Caco-2 (cell line): ENCODE measurements at regions of chr3 and their contacts with region 1.

Region 1: GRCh38 chr3:156151824-156152428 is 31.5 kb downstream of the KCNAB1 start:
- DNase-seq: peak; percentile 65 to 66
- H3K4me3 ChIP-seq: no peak overlapping the region
- H3K4me3 Mint-ChIP-seq: no peak overlapping the region
- H3K27ac Mint-ChIP-seq: no peak overlapping the region
- H3K4me1 ChIP-seq: no peaks in the 10 kb centered on the region
- H3K4me1 Mint-ChIP-seq: peaks cover 8% of the 10 kb centered on the region
- H3K27me3 ChIP-seq: no peaks in the 10 kb centered on the region
- H3K27me3 Mint-ChIP-seq: no peaks in the 10 kb centered on the region
- CTCF ChIP-seq: peak; percentile 66 to 84

Region 2: DNA sequence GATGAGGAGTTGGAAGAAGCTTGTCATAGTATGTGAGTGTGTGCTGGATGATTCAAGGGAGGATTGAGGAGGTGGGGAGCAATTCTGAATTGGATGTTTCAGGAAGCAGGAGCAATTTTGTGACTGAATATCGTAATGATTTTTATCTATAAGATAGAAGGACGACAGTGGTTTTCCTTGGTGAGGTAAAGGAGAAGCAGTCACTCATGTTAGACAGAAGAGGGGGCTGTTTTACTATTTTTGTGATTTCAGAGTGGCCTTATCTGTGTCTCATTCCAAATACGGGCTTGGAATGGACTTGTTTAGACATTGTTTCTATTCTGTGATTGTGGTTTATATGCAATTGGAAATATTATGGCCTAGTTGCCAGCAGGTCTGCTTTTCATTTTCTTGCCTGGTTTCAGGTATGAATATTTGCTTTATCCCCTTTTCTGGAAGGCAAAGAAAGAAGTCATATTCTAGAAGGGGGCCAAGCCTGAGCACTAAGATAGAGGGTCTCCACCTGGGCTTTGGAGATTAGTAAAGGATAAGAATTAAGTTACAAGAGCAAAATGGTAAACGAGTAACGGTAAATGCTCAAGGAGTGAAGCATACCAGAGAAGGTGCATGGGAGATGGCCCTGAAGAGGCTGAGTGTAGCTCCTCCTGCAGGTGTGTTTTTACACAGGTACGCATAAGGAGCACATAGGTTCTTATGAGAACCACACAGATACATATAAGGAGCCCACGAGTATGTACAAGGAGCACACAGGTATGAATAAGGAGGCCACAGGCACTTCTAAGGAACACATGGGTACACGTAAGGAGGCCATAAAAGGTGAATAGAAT is 156.2 kb before region 1 on chr3:
- CTCF ChIA-PET with region 1: no interaction called
- POLR2A ChIA-PET with region 1: no interaction called
- intact Hi-C with region 1: loop called (anchors 1 kb)
- DNase-seq: peak in 1 of 2 experiments; percentile 20
- H3K4me3 ChIP-seq: no peak overlapping the region
- H3K4me3 Mint-ChIP-seq: no peak overlapping the region
- H3K27ac Mint-ChIP-seq: no peak overlapping the region
- H3K4me1 ChIP-seq: 0 out of 2 replicates have a peak, but pooled peaks cover 4% of the 10 kb centered on the region
- H3K4me1 Mint-ChIP-seq: peaks cover 7% of the 10 kb centered on the region
- H3K27me3 ChIP-seq: no peaks in the 10 kb centered on the region
- H3K27me3 Mint-ChIP-seq: peaks cover 5% of the 10 kb centered on the region
- CTCF ChIP-seq: peak; percentile 47 to 50

Region 3: DNA sequence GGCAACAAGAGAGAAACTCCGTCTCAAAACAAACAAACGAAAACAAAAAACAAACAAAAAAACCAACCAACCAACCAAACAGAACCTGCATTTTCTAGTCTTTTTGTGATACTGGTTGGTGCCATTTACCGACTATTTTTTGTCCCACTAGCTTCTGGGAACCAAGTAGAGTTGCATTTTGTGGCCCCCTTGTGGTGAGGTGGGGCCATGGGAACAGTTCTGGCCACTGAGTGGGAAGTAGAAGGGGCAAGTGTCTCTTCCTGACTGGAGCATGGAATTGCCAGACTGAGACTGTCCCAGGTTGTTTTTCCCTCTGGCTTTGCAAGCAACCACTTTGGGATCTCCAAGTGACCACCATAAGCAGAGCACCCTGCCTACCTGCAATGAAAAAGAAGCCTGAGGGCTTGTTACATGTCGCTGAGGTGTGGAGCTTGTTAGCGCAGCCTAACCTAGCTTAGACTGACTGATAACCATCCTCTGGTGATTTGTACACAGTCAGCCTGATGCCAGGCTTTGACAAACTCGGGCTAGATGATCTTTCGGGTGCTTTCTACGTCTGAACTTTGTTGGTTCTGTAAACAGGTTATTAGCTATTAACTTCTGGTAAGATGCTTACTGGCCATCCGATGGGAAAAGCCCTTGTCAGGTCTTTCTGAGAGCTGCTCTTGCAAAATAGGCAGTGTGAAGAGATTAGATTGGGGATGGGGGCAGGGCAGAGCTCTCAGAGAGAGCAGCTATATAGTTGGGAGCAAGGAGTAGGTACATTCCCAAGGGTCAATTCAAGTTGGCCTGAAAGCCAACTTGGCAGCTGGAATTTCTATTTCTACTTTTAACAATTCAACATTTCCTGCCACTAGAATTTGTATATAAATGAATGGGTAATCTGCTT is 230.8 kb after region 1 on chr3:
- CTCF ChIA-PET with region 1: interaction called, 8 read pairs
- POLR2A ChIA-PET with region 1: no interaction called
- intact Hi-C with region 1: loop called (anchors 1 kb)
- DNase-seq: peak; percentile 46 to 59
- H3K4me3 ChIP-seq: no peak overlapping the region
- H3K4me3 Mint-ChIP-seq: no peak overlapping the region
- H3K27ac Mint-ChIP-seq: no peak overlapping the region
- H3K4me1 ChIP-seq: peaks cover 2% of the 10 kb centered on the region; the same call in 1 of the 2 replicates
- H3K4me1 Mint-ChIP-seq: no peaks in the 10 kb centered on the region
- H3K27me3 ChIP-seq: no peaks in the 10 kb centered on the region
- H3K27me3 Mint-ChIP-seq: peaks cover 3% of the 10 kb centered on the region
- CTCF ChIP-seq: peak; percentile 50 to 64

Region 4: DNA sequence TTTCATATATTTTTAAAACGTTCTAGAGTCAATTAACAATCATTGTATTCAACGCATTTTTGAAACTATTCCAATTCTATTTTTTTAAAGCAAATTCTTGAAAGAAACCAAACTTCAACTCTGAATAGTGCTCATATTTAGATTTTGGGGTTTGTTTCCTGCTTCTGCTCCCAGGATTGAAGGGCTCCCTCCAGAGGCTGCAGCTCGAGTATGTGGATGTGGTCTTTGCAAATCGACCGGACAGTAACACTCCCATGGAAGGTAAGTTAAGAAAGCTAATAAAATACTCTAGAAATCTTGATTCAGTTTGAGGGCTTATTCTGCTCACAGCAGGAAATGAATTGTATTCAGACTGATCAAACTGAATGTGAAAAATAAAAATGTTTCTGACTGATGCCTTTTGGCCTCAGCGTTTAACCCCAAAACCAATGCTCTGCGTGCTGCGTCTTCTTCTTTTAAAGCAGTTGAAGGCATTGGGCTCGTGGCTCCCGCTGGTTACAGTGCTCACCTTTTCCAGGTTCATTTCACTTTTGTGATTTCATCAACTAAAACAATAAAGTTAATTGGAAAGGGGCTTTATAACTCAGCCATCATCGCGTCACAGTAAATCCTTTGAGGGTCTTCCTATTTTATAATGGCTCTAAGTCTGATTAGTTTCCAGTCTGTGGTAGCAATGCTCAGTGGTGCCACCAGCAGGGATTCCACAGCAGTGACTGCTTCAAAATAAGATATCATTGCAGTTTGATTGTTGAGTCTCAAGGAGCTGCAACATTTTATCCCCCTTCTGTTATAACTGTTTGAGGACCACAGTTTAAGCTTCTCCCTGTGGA is 322.8 kb after region 1 on chr3:
- CTCF ChIA-PET with region 1: no interaction called
- POLR2A ChIA-PET with region 1: no interaction called
- intact Hi-C with region 1: loop called (anchors 1 kb)
- DNase-seq: peak in 1 of 2 experiments; percentile 13
- H3K4me3 ChIP-seq: no peak overlapping the region
- H3K4me3 Mint-ChIP-seq: no peak overlapping the region
- H3K27ac Mint-ChIP-seq: no peak overlapping the region
- H3K4me1 ChIP-seq: no peaks in the 10 kb centered on the region
- H3K4me1 Mint-ChIP-seq: no peaks in the 10 kb centered on the region
- H3K27me3 ChIP-seq: no peaks in the 10 kb centered on the region; the same call in 1 of the 2 replicates
- H3K27me3 Mint-ChIP-seq: peaks cover 7% of the 10 kb centered on the region
- CTCF ChIP-seq: peak in 1 of 2 experiments; percentile 50

Region 5: DNA sequence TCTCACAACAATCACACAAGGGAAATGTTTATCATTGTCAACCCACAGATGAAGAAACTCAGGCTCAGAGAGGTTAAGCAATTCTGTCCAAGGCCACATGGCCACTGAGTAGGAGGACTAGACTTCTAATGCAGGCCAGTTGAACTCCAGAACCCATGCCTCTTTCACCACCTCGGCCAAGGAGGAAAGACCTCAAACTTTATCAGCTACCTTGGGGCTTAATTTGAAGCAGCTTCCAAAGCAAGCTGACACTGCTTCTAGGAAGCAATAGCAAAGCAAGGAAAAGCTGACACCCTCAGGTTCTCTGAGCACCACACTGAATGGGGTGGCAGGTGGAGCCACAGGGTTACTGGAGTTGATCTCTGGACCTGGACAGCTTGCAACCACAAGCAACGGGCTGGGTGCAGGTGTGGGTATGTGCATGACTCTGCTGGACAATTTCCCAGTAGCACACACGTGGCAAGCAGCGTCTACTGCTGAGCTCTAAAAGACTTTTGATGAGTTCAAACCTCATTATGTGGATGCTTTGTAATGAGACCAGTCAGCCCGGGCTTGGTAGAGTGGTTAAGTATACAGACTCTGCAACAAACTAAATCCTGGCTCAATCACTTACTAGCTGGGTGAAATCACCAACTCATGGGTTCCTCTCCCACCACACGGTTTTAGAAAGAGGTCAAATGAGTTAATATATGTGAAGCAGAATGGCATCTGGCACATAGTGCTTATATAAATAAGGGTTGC is 984.9 kb after region 1 on chr3:
- CTCF ChIA-PET with region 1: no interaction called
- POLR2A ChIA-PET with region 1: no interaction called
- intact Hi-C with region 1: loop called (anchors 2 kb)
- DNase-seq: no peak
- H3K4me3 ChIP-seq: no peak overlapping the region
- H3K4me3 Mint-ChIP-seq: no peak overlapping the region
- H3K27ac Mint-ChIP-seq: no peak overlapping the region
- H3K4me1 ChIP-seq: peaks cover 27% of the 10 kb centered on the region
- H3K4me1 Mint-ChIP-seq: no peaks in the 10 kb centered on the region
- H3K27me3 ChIP-seq: no peaks in the 10 kb centered on the region
- H3K27me3 Mint-ChIP-seq: no peaks in the 10 kb centered on the region
- CTCF ChIP-seq: no peak